Right cardiac atrium (tissue), 5 donors: ENCODE measurements at regions of chr11 and their contacts with region 1.

Region 1: GRCh38 chr11:79708300-79708932 is 267.6 kb upstream of the TENM4 start:
- DNase-seq: no peak
- ATAC-seq: no peak
- H3K4me3 ChIP-seq: no peak overlapping the region
- H3K27ac ChIP-seq: no peak overlapping the region
- H3K4me1 ChIP-seq: no peaks in the 10 kb centered on the region
- H3K27me3 ChIP-seq: no peaks in the 10 kb centered on the region

Region 2: GRCh38 chr11:80155412-80156017 is 447.1 kb after region 1 on chr11:
- intact Hi-C with region 1: loop called in 1 of 4 experiments (anchors 10 kb)
- DNase-seq: no peak
- ATAC-seq: no peak
- H3K4me3 ChIP-seq: no peak overlapping the region
- H3K27ac ChIP-seq: no peak overlapping the region
- H3K4me1 ChIP-seq: no peaks in the 10 kb centered on the region
- H3K27me3 ChIP-seq: no peaks in the 10 kb centered on the region